Activated CD8-positive, alpha-beta T cell treated with anti-CD3 and anti-CD28 coated beads for 36 hours (primary cell): ENCODE measurements at regions of chr14 and their contacts with region 1.

Region 1: DNA sequence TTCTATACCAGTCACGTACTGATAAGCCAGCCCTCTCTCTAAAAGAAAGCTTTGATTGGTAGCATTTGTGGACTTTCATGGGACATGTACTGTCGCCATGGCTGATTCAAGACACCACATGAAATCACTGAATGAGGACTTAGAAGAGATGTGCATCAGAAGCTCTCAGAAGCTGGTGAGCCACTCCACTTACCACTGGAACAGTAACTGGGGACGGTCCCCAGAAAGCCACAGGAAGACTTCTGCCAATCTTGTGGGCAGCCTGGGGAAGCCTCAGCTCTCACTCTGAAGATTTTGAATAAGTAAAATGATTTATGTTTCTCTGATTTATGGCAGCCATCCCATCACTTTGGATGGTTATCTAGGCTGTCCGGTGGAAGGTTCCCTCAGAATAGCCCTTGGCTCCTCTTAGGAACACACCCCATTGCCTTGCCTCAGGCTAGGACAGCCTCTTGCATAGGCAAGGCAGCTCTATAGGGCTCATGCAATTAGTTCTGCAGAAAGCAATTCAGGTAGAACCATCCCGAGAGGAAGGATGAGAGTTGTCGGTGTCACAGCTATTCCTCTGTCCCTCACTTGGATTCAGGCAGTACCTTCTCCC is 9.8 kb downstream of the DHRS1 start:
- DNase-seq: peak; percentile 91
- ATAC-seq: peak; percentile 96
- H3K4me3 Mint-ChIP-seq: no peak overlapping the region
- H3K27ac Mint-ChIP-seq: peak overlapping the region; percentile 40
- H3K4me1 Mint-ChIP-seq: peaks cover 21% of the 10 kb centered on the region
- H3K27me3 Mint-ChIP-seq: no peaks in the 10 kb centered on the region
- CTCF ChIP-seq: no peak

Region 2: GRCh38 chr14:24271134-24271833 is 18.5 kb before region 1 on chr14 and contains the start of gene RABGGTA:
- CTCF ChIA-PET with region 1: interaction called, 12 read pairs
- POLR2A ChIA-PET with region 1: interaction called, 8 read pairs
- intact Hi-C with region 1: no loop called
- DNase-seq: peak; percentile 92
- ATAC-seq: peak; percentile 85
- H3K4me3 Mint-ChIP-seq: peak within 1 kb of the TSS; percentile 82
- H3K27ac Mint-ChIP-seq: peak within 1 kb of the TSS; percentile 94
- H3K4me1 Mint-ChIP-seq: peaks cover 39% of the 10 kb centered on the region
- H3K27me3 Mint-ChIP-seq: no peaks in the 10 kb centered on the region
- CTCF ChIP-seq: peak; percentile 77
- total RNA-seq, gene RABGGTA: 37.6 to 42.7 TPM

Region 3: DNA sequence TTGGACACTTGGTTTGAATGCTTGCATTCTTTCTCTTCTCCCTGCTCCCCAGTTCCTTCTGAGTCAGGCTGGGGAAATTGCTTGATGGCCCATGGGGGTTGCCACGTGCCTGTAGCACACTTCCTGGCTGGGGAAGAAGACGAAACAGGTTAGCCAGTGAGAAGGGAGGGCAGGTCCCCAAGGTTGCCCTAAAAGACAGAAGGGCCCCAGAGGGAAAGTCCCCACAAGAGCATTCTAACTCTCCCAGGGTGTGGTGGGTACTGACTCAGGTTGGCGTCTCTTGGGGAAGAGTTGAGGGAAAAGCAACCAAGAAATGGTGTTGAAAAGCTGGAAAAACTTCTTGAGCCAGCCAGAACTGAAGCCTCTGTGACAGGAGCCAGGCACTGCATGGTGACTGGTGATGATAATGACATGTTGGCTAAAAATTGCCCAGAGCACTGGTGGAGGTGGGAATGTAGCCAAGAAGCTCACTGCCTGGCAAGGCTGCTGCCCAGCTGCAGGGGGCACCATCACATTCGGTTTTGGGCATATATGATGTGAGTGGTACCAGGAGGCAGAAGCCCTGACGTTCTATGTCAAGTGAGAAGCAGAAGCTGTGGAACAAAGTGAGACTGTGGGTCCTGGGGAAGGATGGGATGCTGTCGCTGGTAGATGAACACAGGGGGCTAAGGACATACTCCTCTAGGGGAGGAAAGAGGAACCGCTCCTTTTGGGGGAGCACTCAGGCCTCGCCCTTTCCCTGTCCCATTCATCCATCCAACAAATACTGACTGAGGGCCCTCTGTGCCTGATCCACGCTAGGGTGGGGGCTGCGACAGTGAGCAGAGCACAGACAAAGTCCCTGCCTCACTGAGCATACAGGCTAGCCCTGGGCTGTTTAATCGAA is 10.2 kb before region 1 on chr14:
- CTCF ChIA-PET with region 1: interaction called, 85 read pairs
- POLR2A ChIA-PET with region 1: interaction called, 9 read pairs
- intact Hi-C with region 1: no loop called
- DNase-seq: peak; percentile 76
- ATAC-seq: peak; percentile 88
- H3K4me3 Mint-ChIP-seq: no peak overlapping the region
- H3K27ac Mint-ChIP-seq: peak overlapping the region; percentile 77
- H3K4me1 Mint-ChIP-seq: peaks cover 44% of the 10 kb centered on the region
- H3K27me3 Mint-ChIP-seq: no peaks in the 10 kb centered on the region
- CTCF ChIP-seq: peak; percentile 53